RWPE1 (cell line): ENCODE measurements at regions of chr9 and their contacts with region 1.

Region 1: DNA sequence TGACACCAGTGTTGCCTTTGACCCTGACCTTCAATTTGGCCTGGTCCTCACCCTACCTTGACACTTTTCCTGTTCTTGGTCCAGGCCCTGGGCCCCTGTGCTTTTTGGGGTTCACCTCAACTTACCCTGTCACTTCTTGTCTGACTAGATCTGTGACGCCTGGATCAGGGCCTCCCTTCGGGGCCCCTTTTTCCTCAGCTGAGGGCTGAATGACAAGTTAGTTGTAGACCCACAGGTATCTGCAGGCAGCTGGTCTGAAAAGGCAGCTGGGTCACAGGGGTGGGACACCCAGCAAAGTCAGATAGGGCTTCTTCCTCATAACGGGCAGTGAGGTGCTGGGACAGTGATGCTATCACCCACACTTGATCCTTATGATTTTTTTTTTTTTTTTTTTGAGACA is 10.0 kb upstream of the MYORG start:
- DNase-seq: no peak
- H3K27ac ChIP-seq: no peak overlapping the region
- CTCF ChIP-seq: no peak

Region 2: DNA sequence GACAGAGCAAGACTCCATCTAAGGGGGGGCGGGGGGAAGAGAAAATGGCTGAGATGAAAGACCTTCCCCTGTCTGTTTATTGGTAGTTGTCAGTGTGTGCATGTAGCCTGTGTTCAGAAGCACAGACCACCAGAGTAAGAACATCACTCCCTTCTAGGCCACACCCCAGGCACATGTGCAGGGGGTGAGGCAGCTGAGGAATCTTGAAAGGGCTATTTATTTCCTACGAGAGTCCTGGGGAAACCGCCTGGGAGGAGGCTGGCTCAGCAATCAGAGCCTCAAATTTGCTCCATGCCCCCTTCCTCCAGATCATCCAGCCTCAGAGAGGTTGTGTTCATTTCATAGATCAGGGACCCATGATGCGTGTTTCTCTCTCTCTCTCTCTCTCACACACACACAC is 17.0 kb before region 1 on chr9:
- CTCF ChIA-PET with region 1: no interaction called
- POLR2A ChIA-PET with region 1: interaction called, 11 read pairs
- DNase-seq: no peak
- H3K27ac ChIP-seq: no peak overlapping the region
- CTCF ChIP-seq: no peak

Region 3: DNA sequence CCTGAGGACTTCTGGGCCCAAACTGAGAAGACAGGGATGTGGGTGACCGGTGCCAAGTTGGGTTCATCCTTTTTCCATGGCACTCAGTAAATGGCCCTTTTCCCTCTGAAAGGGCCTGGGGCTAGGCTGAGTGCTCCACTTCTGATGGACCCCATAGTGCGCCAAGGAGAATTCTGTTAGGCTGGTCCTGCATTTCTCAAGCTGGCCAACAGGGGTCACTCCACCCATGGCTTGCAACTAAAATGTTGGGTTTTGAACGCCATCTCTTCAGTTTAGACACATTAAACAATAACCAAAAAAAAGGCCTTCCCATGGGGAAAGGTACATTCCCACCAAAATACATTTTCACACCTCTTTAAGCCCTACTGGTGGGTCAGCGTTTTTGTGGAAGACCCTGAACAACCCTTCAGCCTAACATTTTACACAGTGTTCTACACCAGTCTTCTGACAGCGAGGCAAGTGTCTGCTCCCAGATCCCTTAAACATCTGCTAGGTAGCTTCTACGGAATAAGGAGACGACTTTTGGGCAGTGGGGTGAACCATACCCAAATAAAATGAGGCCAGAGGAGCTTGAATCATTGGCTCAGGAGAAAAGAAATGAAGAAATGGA is 175.6 kb after region 1 on chr9:
- CTCF ChIA-PET with region 1: no interaction called
- POLR2A ChIA-PET with region 1: no interaction called
- DNase-seq: no peak
- H3K27ac ChIP-seq: no peak overlapping the region
- CTCF ChIP-seq: no peak; the same call in 1 of the 2 replicates